IMR-90 (cell line): ENCODE measurements at regions of chr19 and their contacts with region 1.

Region 1: DNA sequence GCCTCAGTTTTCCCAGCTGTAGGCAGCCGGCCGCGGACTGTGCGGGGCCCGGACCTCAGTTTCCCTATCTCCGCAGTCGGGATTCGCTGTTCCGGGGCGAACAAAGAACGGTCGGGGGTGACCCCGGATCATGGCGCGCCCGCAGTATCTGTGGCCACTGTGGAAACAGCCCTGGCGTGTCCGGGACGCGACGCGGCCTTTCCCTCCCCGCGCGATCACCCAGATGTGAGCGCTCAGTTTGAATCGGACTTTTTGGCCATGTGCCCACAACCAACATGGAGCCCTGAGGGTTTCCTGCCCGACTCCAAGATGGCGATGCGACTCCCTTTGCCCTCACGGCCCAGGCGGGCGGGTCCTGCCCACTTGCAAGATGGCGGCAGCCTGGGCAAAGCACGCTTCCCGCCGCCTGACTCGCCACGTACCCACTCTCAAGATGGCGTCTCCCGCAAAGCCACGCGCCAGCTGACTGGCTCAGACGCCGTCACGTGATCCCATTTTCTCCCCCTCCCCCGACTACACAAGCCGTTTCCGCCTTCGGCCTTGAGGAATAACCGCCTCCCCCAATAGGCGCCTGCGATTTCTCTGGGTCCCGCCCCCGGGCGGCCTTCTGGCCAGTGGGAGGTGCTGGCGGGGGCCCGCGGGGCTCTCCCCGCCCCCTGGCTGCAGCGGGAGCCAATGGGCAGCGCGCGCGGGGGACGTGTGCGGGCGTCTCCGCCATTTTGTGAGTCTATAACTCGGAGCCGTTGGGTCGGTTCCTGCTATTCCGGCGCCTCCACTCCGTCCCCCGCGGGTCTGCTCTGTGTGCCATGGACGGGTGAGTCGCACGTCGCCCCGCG is at the start of gene PTBP1:
- DNase-seq: peak; percentile 100
- ATAC-seq: peak; percentile 90
- H3K4me3 ChIP-seq: peak within 1 kb of the TSS; percentile 94
- H3K27ac ChIP-seq: peak within 1 kb of the TSS; percentile 93
- H3K4me1 ChIP-seq: peaks cover 24% of the 10 kb centered on the region
- H3K27me3 ChIP-seq: no peaks in the 10 kb centered on the region
- CTCF ChIP-seq: no peak
- POLR2A ChIP-seq: peak; percentile 97
- RAD21 ChIP-seq: no peak
- total RNA-seq, gene PTBP1: 95.5 and 146 TPM in 2 replicates

Region 2: DNA sequence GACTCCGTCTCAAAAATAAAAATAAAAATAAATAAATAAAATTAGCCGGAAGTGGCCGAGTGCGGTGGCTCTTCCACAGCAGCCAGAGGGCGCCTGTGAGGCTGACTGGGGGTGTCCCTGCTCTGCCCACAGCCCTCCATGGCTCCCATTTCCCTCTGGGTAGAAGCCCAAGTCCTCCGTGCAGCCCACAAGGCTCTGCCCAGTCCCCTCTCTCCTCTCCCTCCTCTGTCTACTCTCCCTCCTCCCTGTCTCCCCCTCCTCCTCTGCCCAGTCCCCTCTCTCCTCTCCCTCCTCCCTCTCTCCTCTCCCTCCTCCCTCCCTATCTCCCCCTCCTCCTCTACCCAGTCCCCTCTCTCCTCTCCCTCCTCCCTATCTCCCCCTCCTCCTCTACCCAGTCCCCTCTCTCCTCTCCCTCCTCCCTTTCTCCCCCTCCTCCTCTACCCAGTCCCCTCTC is 25.6 kb before region 1 on chr19:
- CTCF ChIA-PET with region 1: interaction called, 4 read pairs
- POLR2A ChIA-PET with region 1: no interaction called
- dilution Hi-C with region 1: no loop called
- in situ Hi-C with region 1: no loop called
- intact Hi-C with region 1: loop called (anchors 2 kb)
- DNase-seq: peak; percentile 43
- ATAC-seq: no peak
- H3K4me3 ChIP-seq: no peak overlapping the region
- H3K27ac ChIP-seq: no peak overlapping the region
- H3K4me1 ChIP-seq: no peaks in the 10 kb centered on the region; the same call in 1 of the 2 replicates
- H3K27me3 ChIP-seq: no peaks in the 10 kb centered on the region
- CTCF ChIP-seq: peak; percentile 57
- POLR2A ChIP-seq: no peak
- RAD21 ChIP-seq: peak; percentile 47

Region 3: GRCh38 chr19:778910-779653 is 17.8 kb before region 1 on chr19:
- CTCF ChIA-PET with region 1: no interaction called
- POLR2A ChIA-PET with region 1: no interaction called
- dilution Hi-C with region 1: no loop called
- in situ Hi-C with region 1: no loop called
- intact Hi-C with region 1: loop called (anchors 2 kb)
- DNase-seq: peak; percentile 94
- ATAC-seq: peak; percentile 85
- H3K4me3 ChIP-seq: no peak overlapping the region
- H3K27ac ChIP-seq: peak overlapping the region; percentile 83
- H3K4me1 ChIP-seq: peaks cover 19% of the 10 kb centered on the region
- H3K27me3 ChIP-seq: no peaks in the 10 kb centered on the region
- CTCF ChIP-seq: no peak
- POLR2A ChIP-seq: no peak
- RAD21 ChIP-seq: no peak

Region 4: GRCh38 chr19:827783-828321 is 30.9 kb after region 1 on chr19 and contains the start of gene AZU1:
- CTCF ChIA-PET with region 1: no interaction called
- POLR2A ChIA-PET with region 1: no interaction called
- dilution Hi-C with region 1: no loop called
- in situ Hi-C with region 1: no loop called
- intact Hi-C with region 1: no loop called
- DNase-seq: no peak
- ATAC-seq: no peak
- H3K4me3 ChIP-seq: no peak within 1 kb of the TSS
- H3K27ac ChIP-seq: no peak within 1 kb of the TSS
- H3K4me1 ChIP-seq: peaks cover 3% of the 10 kb centered on the region; the same call in 1 of the 2 replicates
- H3K27me3 ChIP-seq: no peaks in the 10 kb centered on the region
- CTCF ChIP-seq: no peak
- POLR2A ChIP-seq: no peak
- RAD21 ChIP-seq: no peak
- total RNA-seq, gene AZU1: not detected in 2 replicates

Region 5: GRCh38 chr19:1074544-1075283 is 277.8 kb after region 1 on chr19:
- CTCF ChIA-PET with region 1: no interaction called
- POLR2A ChIA-PET with region 1: no interaction called
- dilution Hi-C with region 1: no loop called
- in situ Hi-C with region 1: no loop called
- intact Hi-C with region 1: no loop called
- DNase-seq: no peak
- ATAC-seq: no peak
- H3K4me3 ChIP-seq: peak overlapping the region; percentile 29; the same call in 1 of the 2 replicates
- H3K27ac ChIP-seq: no peak overlapping the region
- H3K4me1 ChIP-seq: no peaks in the 10 kb centered on the region
- H3K27me3 ChIP-seq: peaks cover 21% of the 10 kb centered on the region
- CTCF ChIP-seq: no peak
- POLR2A ChIP-seq: no peak
- RAD21 ChIP-seq: no peak